ENCODE measurements at regions of chr20 and their contacts with region 1.

Region 1: GRCh38 chr20:10673988-10674711 is at the start of gene JAG1:
- DNase-seq: peak; percentile 98
- H3K4me3 ChIP-seq: peak within 1 kb of the TSS; percentile 72 to 99 (median 90)
- H3K27ac ChIP-seq: peak within 1 kb of the TSS; percentile 96 to 99 (median 98)
- H3K4me1 ChIP-seq: peaks cover 0 to 38% (median 25%) of the 10 kb centered on the region in 4 donors
- H3K27me3 ChIP-seq: no peaks in the 10 kb centered on the region
- CTCF ChIP-seq: no peak
- EP300 ChIP-seq: no peak
- POLR2A ChIP-seq: no peak
- total RNA-seq, gene JAG1: 29.9 to 76.4 (median 53.1) TPM

Region 2: GRCh38 chr20:10469599-10469998 is 204.6 kb before region 1 on chr20:
- intact Hi-C with region 1: loop called (anchors 2 kb)
- DNase-seq: peak; percentile 88
- H3K4me3 ChIP-seq: no peak overlapping the region
- H3K27ac ChIP-seq: peak overlapping the region in 3 of 4 donors; percentile 27 to 52 (median 51)
- H3K4me1 ChIP-seq: peaks cover 0 to 49% (median 32%) of the 10 kb centered on the region in 4 donors
- H3K27me3 ChIP-seq: no peaks in the 10 kb centered on the region
- CTCF ChIP-seq: peak; percentile 54 to 70 (median 56)
- EP300 ChIP-seq: no peak
- POLR2A ChIP-seq: no peak

Region 3: GRCh38 chr20:10521068-10521831 is 152.9 kb before region 1 on chr20:
- intact Hi-C with region 1: loop called (anchors 5 kb)
- DNase-seq: peak; percentile 82
- H3K4me3 ChIP-seq: no peak overlapping the region
- H3K27ac ChIP-seq: peak overlapping the region in 3 of 4 donors; percentile 75 to 86 (median 81)
- H3K4me1 ChIP-seq: peaks cover 0 to 62% (median 52%) of the 10 kb centered on the region in 4 donors
- H3K27me3 ChIP-seq: no peaks in the 10 kb centered on the region
- CTCF ChIP-seq: no peak
- EP300 ChIP-seq: peak; percentile 64 to 89 (median 83)
- POLR2A ChIP-seq: no peak

Region 4: GRCh38 chr20:10611357-10611756 is 62.8 kb before region 1 on chr20:
- intact Hi-C with region 1: loop called (anchors 5 kb)
- DNase-seq: peak; percentile 85
- H3K4me3 ChIP-seq: no peak overlapping the region
- H3K27ac ChIP-seq: no peak overlapping the region
- H3K4me1 ChIP-seq: no peaks in the 10 kb centered on the region
- H3K27me3 ChIP-seq: no peaks in the 10 kb centered on the region
- CTCF ChIP-seq: peak; percentile 34 to 50 (median 38)
- EP300 ChIP-seq: no peak
- POLR2A ChIP-seq: no peak

Region 5: GRCh38 chr20:11204926-11205768 is 531.0 kb after region 1 on chr20:
- intact Hi-C with region 1: loop called (anchors 5 kb)
- DNase-seq: peak; percentile 66
- H3K4me3 ChIP-seq: no peak overlapping the region
- H3K27ac ChIP-seq: peak overlapping the region in 1 of 4 donors; percentile 9
- H3K4me1 ChIP-seq: peaks cover 0 to 31% (median 12%) of the 10 kb centered on the region in 4 donors
- H3K27me3 ChIP-seq: no peaks in the 10 kb centered on the region
- CTCF ChIP-seq: peak in 3 of 4 experiments; percentile 54 to 64 (median 54)
- EP300 ChIP-seq: no peak
- POLR2A ChIP-seq: no peak

Region 6: DNA sequence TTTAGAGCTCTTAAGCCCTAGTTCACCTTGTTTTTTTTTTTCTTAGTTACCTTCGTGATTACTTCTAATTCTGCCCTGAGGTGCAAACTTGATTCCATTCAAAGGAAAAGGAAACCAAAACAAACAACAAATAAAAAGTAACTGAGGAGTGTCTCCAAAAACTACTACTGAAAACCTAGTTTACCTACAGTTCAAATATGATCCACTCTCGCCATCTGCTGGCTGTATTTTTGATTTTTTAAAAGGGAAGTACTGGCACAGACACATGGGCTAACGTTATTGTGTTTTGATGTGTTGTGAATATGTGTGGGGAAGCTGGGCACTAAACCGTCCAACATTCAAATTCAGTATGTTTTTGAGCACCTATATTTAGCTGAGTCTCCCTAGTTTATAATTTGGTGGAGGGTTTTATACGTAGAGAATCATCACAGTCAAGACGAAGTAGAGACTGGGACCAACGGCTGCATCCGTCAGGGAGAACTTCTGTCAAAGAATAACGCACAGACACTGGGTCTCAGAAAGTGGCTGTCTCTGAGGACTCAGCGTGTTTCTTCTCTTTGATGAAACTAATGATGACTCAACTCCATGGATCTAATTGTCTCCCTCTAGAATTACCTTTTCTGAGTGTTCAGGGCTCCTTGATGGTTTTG is 870.0 kb after region 1 on chr20:
- intact Hi-C with region 1: loop called (anchors 5 kb)
- DNase-seq: no peak
- H3K4me3 ChIP-seq: no peak overlapping the region
- H3K27ac ChIP-seq: no peak overlapping the region
- H3K4me1 ChIP-seq: no peaks in the 10 kb centered on the region
- H3K27me3 ChIP-seq: no peaks in the 10 kb centered on the region
- CTCF ChIP-seq: peak; percentile 45 to 69 (median 57)
- EP300 ChIP-seq: no peak
- POLR2A ChIP-seq: no peak